A549 (cell line): ENCODE measurements at regions of chr9 and their contacts with region 1.

Region 1: DNA sequence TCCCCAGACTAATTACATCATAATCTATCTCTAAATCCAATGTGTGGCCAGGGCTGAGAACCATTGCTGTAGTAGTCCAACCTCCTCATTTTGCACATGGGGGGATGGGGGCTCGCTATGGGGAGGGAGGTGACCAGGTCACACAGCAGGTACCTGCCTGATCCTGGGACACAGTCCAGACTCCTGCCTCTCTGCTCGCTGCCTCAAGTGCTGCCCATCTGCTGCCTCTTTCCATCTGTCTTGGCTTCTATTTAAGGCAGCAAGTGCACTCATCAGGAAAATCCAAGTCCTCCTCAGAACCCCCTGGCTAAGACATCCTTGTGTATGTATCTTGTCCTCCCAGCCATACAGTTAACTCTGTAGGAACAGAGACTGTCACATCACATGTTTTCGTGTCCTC is 57.7 kb upstream of the FRRS1L start:
- DNase-seq: no peak
- ATAC-seq: no peak
- H3K4me3 ChIP-seq: no peak overlapping the region
- H3K27ac ChIP-seq: no peak overlapping the region
- H3K4me1 ChIP-seq: no peaks in the 10 kb centered on the region
- CTCF ChIP-seq: no peak
- EP300 ChIP-seq: no peak
- POLR2A ChIP-seq: no peak
- RAD21 ChIP-seq: no peak

Region 2: GRCh38 chr9:109086242-109086641 is 138.5 kb before region 1 on chr9:
- CTCF ChIA-PET with region 1: no interaction called
- POLR2A ChIA-PET with region 1: no interaction called
- DNase-seq: peak in 1 of 2 experiments; percentile 27
- ATAC-seq: peak; percentile 50 to 71; a peak in 4 of 6 replicates
- H3K4me3 ChIP-seq: no peak overlapping the region
- H3K27ac ChIP-seq: no peak overlapping the region
- H3K4me1 ChIP-seq: peaks cover 36% of the 10 kb centered on the region
- CTCF ChIP-seq: no peak
- EP300 ChIP-seq: no peak
- POLR2A ChIP-seq: no peak
- RAD21 ChIP-seq: no peak

Region 3: GRCh38 chr9:109244157-109245132 is 19.7 kb after region 1 on chr9:
- CTCF ChIA-PET with region 1: interaction called, 17 read pairs
- POLR2A ChIA-PET with region 1: no interaction called
- DNase-seq: peak; percentile 62 to 72
- ATAC-seq: peak; percentile 91 to 96
- H3K4me3 ChIP-seq: no peak overlapping the region
- H3K27ac ChIP-seq: peak overlapping the region in 1 of 2 experiments; percentile 40; a peak in 1 of 6 replicates
- H3K4me1 ChIP-seq: peaks cover 20% of the 10 kb centered on the region
- CTCF ChIP-seq: peak; percentile 84
- EP300 ChIP-seq: no peak
- POLR2A ChIP-seq: no peak
- RAD21 ChIP-seq: peak; percentile 64 to 75

Region 4: GRCh38 chr9:109274884-109275730 is 50.4 kb after region 1 on chr9:
- CTCF ChIA-PET with region 1: no interaction called
- POLR2A ChIA-PET with region 1: no interaction called
- DNase-seq: no peak
- ATAC-seq: no peak
- H3K4me3 ChIP-seq: no peak overlapping the region
- H3K27ac ChIP-seq: no peak overlapping the region
- H3K4me1 ChIP-seq: no peaks in the 10 kb centered on the region
- CTCF ChIP-seq: no peak
- EP300 ChIP-seq: no peak
- POLR2A ChIP-seq: no peak
- RAD21 ChIP-seq: no peak